CD8-positive, alpha-beta memory T cell (primary cell): ENCODE measurements at regions of chr11 and their contacts with region 1.

Region 1: GRCh38 chr11:73625696-73626318 is 20.6 kb upstream of the PLEKHB1 start:
- DNase-seq: peak; percentile 55 to 76 (median 62)
- H3K4me3 ChIP-seq: no peak overlapping the region
- H3K4me3 Mint-ChIP-seq: peak overlapping the region in 1 of 7 donors; percentile 21
- H3K27ac ChIP-seq: no peak overlapping the region
- H3K27ac Mint-ChIP-seq: no peak overlapping the region
- H3K4me1 ChIP-seq: no peaks in the 10 kb centered on the region
- H3K4me1 Mint-ChIP-seq: peaks cover 0 to 3% (median 2%) of the 10 kb centered on the region in 3 donors
- H3K27me3 ChIP-seq: peaks cover 5% of the 10 kb centered on the region
- H3K27me3 Mint-ChIP-seq: peaks cover 11 to 26% of the 10 kb centered on the region in 2 donors

Region 2: GRCh38 chr11:73307323-73308002 is 318.3 kb before region 1 on chr11:
- CTCF ChIA-PET with region 1: interaction called, 3 read pairs
- POLR2A ChIA-PET with region 1: interaction called, 10 read pairs
- DNase-seq: peak; percentile 79 to 91 (median 82)
- H3K4me3 ChIP-seq: peak overlapping the region; percentile 67
- H3K4me3 Mint-ChIP-seq: peak overlapping the region; percentile 86 to 96 (median 89)
- H3K27ac ChIP-seq: peak overlapping the region; percentile 25
- H3K27ac Mint-ChIP-seq: peak overlapping the region in 6 of 8 donors; percentile 4 to 95 (median 30)
- H3K4me1 ChIP-seq: peaks cover 7% of the 10 kb centered on the region
- H3K4me1 Mint-ChIP-seq: peaks cover 9 to 10% (median 10%) of the 10 kb centered on the region in 3 donors
- H3K27me3 ChIP-seq: peaks cover 5% of the 10 kb centered on the region
- H3K27me3 Mint-ChIP-seq: peaks cover 16 to 33% of the 10 kb centered on the region in 2 donors

Region 3: GRCh38 chr11:73647459-73648100 is 21.8 kb after region 1 on chr11:
- CTCF ChIA-PET with region 1: interaction called, 16 read pairs
- POLR2A ChIA-PET with region 1: interaction called, 3 read pairs
- DNase-seq: peak; percentile 87 to 96 (median 92)
- H3K4me3 ChIP-seq: peak overlapping the region; percentile 83
- H3K4me3 Mint-ChIP-seq: peak overlapping the region; percentile 49 to 96 (median 89)
- H3K27ac ChIP-seq: peak overlapping the region; percentile 7
- H3K27ac Mint-ChIP-seq: peak overlapping the region; percentile 82 to 96 (median 94)
- H3K4me1 ChIP-seq: peaks cover 15% of the 10 kb centered on the region
- H3K4me1 Mint-ChIP-seq: peaks cover 10 to 27% (median 21%) of the 10 kb centered on the region in 3 donors
- H3K27me3 ChIP-seq: no peaks in the 10 kb centered on the region
- H3K27me3 Mint-ChIP-seq: no peaks in the 10 kb centered on the region

Region 4: GRCh38 chr11:73653996-73654395 is 28.2 kb after region 1 on chr11:
- CTCF ChIA-PET with region 1: interaction called, 138 read pairs
- POLR2A ChIA-PET with region 1: no interaction called
- DNase-seq: no peak
- H3K4me3 ChIP-seq: no peak overlapping the region
- H3K4me3 Mint-ChIP-seq: no peak overlapping the region
- H3K27ac ChIP-seq: no peak overlapping the region
- H3K27ac Mint-ChIP-seq: peak overlapping the region in 2 of 8 donors; percentile 27 to 65
- H3K4me1 ChIP-seq: no peaks in the 10 kb centered on the region
- H3K4me1 Mint-ChIP-seq: peaks cover 0 to 5% (median 4%) of the 10 kb centered on the region in 3 donors
- H3K27me3 ChIP-seq: no peaks in the 10 kb centered on the region
- H3K27me3 Mint-ChIP-seq: no peaks in the 10 kb centered on the region

Region 5: DNA sequence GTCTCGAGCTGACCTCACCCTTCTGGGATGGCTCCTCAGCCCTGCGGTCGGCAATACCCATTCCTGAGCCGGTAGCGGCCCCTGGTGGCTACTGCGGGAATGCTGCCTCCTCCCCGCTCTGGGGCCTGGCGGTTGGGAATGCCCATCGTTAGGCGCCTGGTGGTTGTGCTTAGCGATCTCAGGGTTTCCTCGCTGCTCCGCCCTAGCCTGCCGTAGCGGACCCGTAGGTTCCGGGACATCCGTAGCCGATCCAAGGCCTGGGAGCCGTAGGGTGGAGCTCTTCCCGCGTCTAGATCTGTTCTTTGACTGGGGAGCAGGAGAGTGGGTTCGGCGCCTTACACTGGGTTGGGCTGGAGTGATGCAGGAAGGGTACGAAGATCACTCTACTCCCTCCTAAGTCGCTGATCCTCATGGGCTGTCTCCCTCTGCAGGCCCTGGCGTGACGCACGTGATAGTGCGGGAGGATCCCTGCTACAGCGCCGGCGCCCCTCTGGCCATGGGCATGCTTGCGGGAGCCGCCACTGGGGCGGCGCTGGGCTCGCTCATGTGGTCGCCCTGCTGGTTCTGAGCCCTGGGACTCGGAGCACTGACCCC is 35.3 kb after region 1 on chr11:
- CTCF ChIA-PET with region 1: interaction called, 138 read pairs
- POLR2A ChIA-PET with region 1: no interaction called
- DNase-seq: peak; percentile 71 to 85 (median 78)
- H3K4me3 ChIP-seq: no peak overlapping the region
- H3K4me3 Mint-ChIP-seq: peak overlapping the region in 3 of 7 donors; percentile 42 to 61 (median 48)
- H3K27ac ChIP-seq: no peak overlapping the region
- H3K27ac Mint-ChIP-seq: no peak overlapping the region
- H3K4me1 ChIP-seq: peaks cover 7% of the 10 kb centered on the region
- H3K4me1 Mint-ChIP-seq: peaks cover 7 to 13% (median 8%) of the 10 kb centered on the region in 3 donors
- H3K27me3 ChIP-seq: no peaks in the 10 kb centered on the region
- H3K27me3 Mint-ChIP-seq: peaks cover 0 to 3% of the 10 kb centered on the region in 2 donors

Region 6: DNA sequence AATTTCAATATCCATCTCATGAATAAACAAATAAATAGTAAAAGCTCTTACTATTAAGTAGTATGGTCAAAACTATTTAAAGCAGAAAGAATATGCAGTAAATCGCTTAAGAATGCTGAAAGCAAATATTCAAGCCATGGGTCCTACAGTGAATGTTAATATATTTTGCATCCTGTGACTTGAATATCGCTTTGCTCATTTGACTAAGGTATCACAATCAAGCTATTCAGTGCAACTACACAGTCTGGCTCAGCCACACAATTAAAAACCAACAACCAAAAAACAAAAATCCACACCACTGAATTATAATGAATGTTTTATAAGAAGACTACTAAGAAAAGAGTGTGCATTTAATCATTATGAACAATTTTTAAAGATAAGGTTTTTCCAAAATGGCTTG is 89.7 kb after region 1 on chr11:
- CTCF ChIA-PET with region 1: no interaction called
- POLR2A ChIA-PET with region 1: no interaction called
- DNase-seq: no peak
- H3K4me3 ChIP-seq: no peak overlapping the region
- H3K4me3 Mint-ChIP-seq: no peak overlapping the region
- H3K27ac ChIP-seq: no peak overlapping the region
- H3K27ac Mint-ChIP-seq: peak overlapping the region in 1 of 8 donors; percentile 51
- H3K4me1 ChIP-seq: peaks cover 3% of the 10 kb centered on the region
- H3K4me1 Mint-ChIP-seq: peaks cover 7 to 15% (median 14%) of the 10 kb centered on the region in 3 donors
- H3K27me3 ChIP-seq: no peaks in the 10 kb centered on the region
- H3K27me3 Mint-ChIP-seq: no peaks in the 10 kb centered on the region

Region 7: DNA sequence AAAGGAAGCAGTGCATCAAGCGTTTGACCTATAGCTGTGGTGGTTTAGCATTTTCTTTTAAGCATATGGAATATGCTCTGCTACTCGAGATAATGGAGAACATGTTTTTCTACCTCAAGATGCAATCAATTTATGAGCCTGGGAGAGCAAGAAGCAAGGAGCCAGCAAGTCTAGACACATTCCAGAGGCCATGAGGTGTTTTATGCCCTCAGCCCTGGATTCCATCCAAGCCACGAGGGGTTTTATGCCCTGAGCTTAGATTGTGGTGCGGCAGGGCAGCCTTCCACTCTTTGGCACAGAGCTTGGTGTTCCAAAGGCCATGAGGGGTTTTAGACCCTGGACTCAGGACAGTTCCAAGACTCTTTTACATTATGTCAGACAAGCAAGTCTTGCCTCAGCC is 313.3 kb after region 1 on chr11:
- CTCF ChIA-PET with region 1: no interaction called
- POLR2A ChIA-PET with region 1: no interaction called
- DNase-seq: no peak
- H3K4me3 ChIP-seq: no peak overlapping the region
- H3K4me3 Mint-ChIP-seq: no peak overlapping the region
- H3K27ac ChIP-seq: no peak overlapping the region
- H3K27ac Mint-ChIP-seq: no peak overlapping the region
- H3K4me1 ChIP-seq: no peaks in the 10 kb centered on the region
- H3K4me1 Mint-ChIP-seq: no peaks in the 10 kb centered on the region
- H3K27me3 ChIP-seq: no peaks in the 10 kb centered on the region
- H3K27me3 Mint-ChIP-seq: no peaks in the 10 kb centered on the region